ENCODE measurements at regions of chr15 and their contacts with region 1.

Region 1: DNA sequence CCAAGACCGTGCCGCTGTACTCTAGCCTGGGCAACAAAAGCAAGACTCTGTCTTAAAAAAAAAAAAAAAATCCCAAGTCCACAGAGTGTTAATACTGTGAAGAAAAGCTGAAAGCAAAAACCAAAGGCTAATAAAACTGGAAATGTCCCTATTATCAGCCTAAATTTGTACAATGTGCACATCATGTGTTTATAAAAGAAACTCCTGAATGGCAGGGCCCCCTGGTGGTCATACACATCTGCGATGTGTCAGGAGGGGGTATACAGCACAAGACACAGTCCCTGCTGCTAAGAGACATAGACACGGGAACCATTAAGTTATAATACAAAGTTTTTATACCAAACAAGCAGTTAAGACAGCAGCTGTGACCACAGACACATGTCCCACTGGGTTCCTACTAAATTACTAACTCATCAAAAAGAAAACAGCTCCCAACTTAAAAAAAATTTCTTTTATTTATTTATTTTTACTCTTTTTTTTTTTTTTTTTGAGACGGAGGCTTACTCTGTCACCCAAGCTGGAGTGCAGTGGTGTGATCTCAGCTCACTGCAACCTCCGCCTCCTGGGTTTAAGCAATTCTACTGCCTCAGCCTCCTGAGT is 31.0 kb downstream of the IDH2 start:
- DNase-seq: peak; percentile 41 to 82 (median 74)
- ATAC-seq: peak; percentile 98
- H3K4me3 ChIP-seq: no peak overlapping the region
- H3K4me3 Mint-ChIP-seq: no peak overlapping the region
- H3K27ac ChIP-seq: no peak overlapping the region
- H3K27ac Mint-ChIP-seq: peak overlapping the region in 5 of 9 donors; percentile 8 to 87 (median 70)
- H3K4me1 ChIP-seq: no peaks in the 10 kb centered on the region
- H3K4me1 Mint-ChIP-seq: peaks cover 0 to 10% (median 7%) of the 10 kb centered on the region in 7 donors
- H3K27me3 ChIP-seq: no peaks in the 10 kb centered on the region
- H3K27me3 Mint-ChIP-seq: no peaks in the 10 kb centered on the region

Region 2: DNA sequence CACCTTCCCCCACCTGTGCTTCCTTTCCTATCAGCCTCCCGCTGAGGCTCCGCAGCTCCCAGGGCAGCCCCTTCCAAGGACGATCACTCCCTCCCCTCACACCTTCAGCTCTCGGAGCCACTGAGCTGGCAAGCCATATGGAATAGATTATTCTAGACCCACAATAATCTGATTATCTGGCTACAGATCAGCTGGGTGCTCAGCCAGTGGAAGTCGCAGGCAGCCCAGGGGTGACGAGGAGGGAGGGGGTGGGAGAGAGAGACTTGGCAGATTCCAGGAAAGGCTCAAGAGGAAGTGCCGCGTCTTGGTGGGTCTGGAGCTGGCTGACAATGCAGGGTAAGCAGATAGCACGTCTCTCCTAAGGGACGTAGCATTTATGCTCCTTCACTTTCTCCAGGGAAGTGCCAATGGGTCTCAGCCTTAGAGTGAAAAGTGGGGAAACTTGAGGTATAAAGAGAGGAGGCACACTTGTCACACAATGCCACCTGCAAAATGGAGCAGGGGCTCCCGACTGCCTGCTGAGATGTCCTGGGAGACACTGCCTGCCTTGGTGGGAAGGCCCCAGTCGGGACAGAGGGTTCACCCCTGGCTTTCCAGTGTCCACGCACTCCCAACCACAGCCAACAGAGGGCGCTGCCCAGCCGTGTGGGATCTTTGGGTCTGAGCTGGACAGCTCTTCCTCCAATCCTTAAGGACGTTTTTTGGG is 310.9 kb before region 1 on chr15:
- CTCF ChIA-PET with region 1: interaction called, 3 read pairs
- POLR2A ChIA-PET with region 1: no interaction called
- intact Hi-C with region 1: loop called (anchors 1 to 5 kb)
- DNase-seq: peak in 7 of 9 donors; percentile 30 to 85 (median 50)
- ATAC-seq: peak; percentile 91
- H3K4me3 ChIP-seq: no peak overlapping the region
- H3K4me3 Mint-ChIP-seq: no peak overlapping the region
- H3K27ac ChIP-seq: no peak overlapping the region
- H3K27ac Mint-ChIP-seq: no peak overlapping the region
- H3K4me1 ChIP-seq: no peaks in the 10 kb centered on the region
- H3K4me1 Mint-ChIP-seq: peaks cover 0 to 5% (median 0%) of the 10 kb centered on the region in 7 donors
- H3K27me3 ChIP-seq: no peaks in the 10 kb centered on the region
- H3K27me3 Mint-ChIP-seq: peaks cover under 1 to 21% (median 8%) of the 10 kb centered on the region in 5 donors

Region 3: GRCh38 chr15:89893696-89894455 is 177.4 kb before region 1 on chr15 and contains the start of gene AP3S2:
- CTCF ChIA-PET with region 1: interaction called, 23 read pairs
- POLR2A ChIA-PET with region 1: interaction called, 3 read pairs
- intact Hi-C with region 1: loop called (anchors 1 kb)
- DNase-seq: peak; percentile 79 to 90 (median 86)
- ATAC-seq: peak; percentile 97
- H3K4me3 ChIP-seq: peak within 1 kb of the TSS; percentile 88
- H3K4me3 Mint-ChIP-seq: peak within 1 kb of the TSS; percentile 89 to 99 (median 96)
- H3K27ac ChIP-seq: peak within 1 kb of the TSS; percentile 81
- H3K27ac Mint-ChIP-seq: peak within 1 kb of the TSS; percentile 91 to 98 (median 95)
- H3K4me1 ChIP-seq: peaks cover 6 to 14% of the 10 kb centered on the region in 2 donors
- H3K4me1 Mint-ChIP-seq: peaks cover 17 to 46% (median 36%) of the 10 kb centered on the region in 7 donors
- H3K27me3 ChIP-seq: no peaks in the 10 kb centered on the region
- H3K27me3 Mint-ChIP-seq: no peaks in the 10 kb centered on the region
- total RNA-seq, gene AP3S2: 24.3 to 31.7 (median 28.4) TPM

Region 4: GRCh38 chr15:90013503-90013937 is 57.8 kb before region 1 on chr15:
- CTCF ChIA-PET with region 1: interaction called, 3 read pairs
- POLR2A ChIA-PET with region 1: interaction called, 4 read pairs
- intact Hi-C with region 1: loop called in 1 of 2 experiments (anchors 1 kb)
- DNase-seq: peak in 7 of 9 donors; percentile 40 to 83 (median 77)
- ATAC-seq: peak; percentile 94
- H3K4me3 ChIP-seq: peak overlapping the region; percentile 17
- H3K4me3 Mint-ChIP-seq: peak overlapping the region; percentile 7 to 81 (median 69)
- H3K27ac ChIP-seq: peak overlapping the region; percentile 3
- H3K27ac Mint-ChIP-seq: peak overlapping the region in 8 of 9 donors; percentile 9 to 81 (median 35)
- H3K4me1 ChIP-seq: peaks cover 16 to 27% of the 10 kb centered on the region in 2 donors
- H3K4me1 Mint-ChIP-seq: peaks cover 47 to 69% (median 54%) of the 10 kb centered on the region in 7 donors
- H3K27me3 ChIP-seq: no peaks in the 10 kb centered on the region
- H3K27me3 Mint-ChIP-seq: no peaks in the 10 kb centered on the region

Region 5: DNA sequence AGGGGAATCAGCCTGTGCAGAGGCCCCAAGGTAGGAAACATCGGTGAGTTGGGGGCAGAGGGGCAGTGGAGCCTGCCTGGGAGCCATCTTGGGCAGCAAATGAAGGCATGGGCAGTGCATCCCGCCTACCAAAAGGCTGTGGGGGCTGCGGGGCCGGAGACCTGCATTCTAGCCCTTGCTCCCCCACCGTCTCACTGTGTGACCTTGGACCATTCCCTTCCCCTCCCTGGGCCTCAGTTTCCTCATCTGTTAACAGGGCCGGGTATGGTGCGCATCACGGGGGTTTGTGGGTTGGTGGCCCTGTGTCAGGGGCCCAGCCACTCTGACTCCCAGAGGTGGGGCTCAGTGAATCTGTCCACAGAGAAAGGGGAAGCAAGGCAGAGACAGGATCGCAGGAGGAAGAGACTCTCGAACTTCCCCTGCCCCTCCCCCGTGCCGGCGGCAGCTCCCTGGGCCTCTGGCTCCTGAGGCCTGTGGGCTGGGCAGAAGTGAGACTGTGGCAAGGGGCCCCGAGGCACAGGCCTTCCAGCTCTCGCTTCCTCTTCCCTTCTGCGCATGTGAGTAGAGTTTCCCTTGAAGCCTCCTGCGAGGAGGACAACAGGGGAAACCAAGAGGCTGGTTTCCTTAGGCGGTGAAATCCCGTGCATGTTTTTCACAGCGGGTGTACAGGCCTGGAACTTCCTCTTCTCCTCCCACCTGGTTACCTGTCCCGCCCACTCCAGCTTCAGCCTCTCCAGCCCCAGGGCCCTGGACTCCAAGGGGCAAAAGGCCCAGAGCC is 11.9 kb before region 1 on chr15:
- CTCF ChIA-PET with region 1: interaction called, 14 read pairs
- POLR2A ChIA-PET with region 1: no interaction called
- intact Hi-C with region 1: no loop called
- DNase-seq: peak; percentile 58 to 80 (median 64)
- ATAC-seq: peak; percentile 90
- H3K4me3 ChIP-seq: no peak overlapping the region
- H3K4me3 Mint-ChIP-seq: peak overlapping the region; percentile 29 to 69 (median 52)
- H3K27ac ChIP-seq: peak overlapping the region; percentile 68
- H3K27ac Mint-ChIP-seq: peak overlapping the region; percentile 84 to 94 (median 90)
- H3K4me1 ChIP-seq: peaks cover 15 to 33% of the 10 kb centered on the region in 2 donors
- H3K4me1 Mint-ChIP-seq: peaks cover 38 to 67% (median 55%) of the 10 kb centered on the region in 7 donors
- H3K27me3 ChIP-seq: no peaks in the 10 kb centered on the region
- H3K27me3 Mint-ChIP-seq: no peaks in the 10 kb centered on the region

Region 6: GRCh38 chr15:90512981-90513380 is 441.7 kb after region 1 on chr15:
- CTCF ChIA-PET with region 1: no interaction called
- POLR2A ChIA-PET with region 1: no interaction called
- intact Hi-C with region 1: no loop called
- DNase-seq: no peak
- ATAC-seq: no peak
- H3K4me3 ChIP-seq: no peak overlapping the region
- H3K4me3 Mint-ChIP-seq: peak overlapping the region in 2 of 10 donors; percentile 3 to 21
- H3K27ac ChIP-seq: no peak overlapping the region
- H3K27ac Mint-ChIP-seq: peak overlapping the region in 1 of 9 donors; percentile 43
- H3K4me1 ChIP-seq: no peaks in the 10 kb centered on the region
- H3K4me1 Mint-ChIP-seq: peaks cover 8 to 41% (median 20%) of the 10 kb centered on the region in 7 donors
- H3K27me3 ChIP-seq: no peaks in the 10 kb centered on the region
- H3K27me3 Mint-ChIP-seq: no peaks in the 10 kb centered on the region